Dendritic cell treated with granulocyte-macrophage colony-stimulating factor and Interleukin-4, amounts not matched to agents 40 ng/mL and 50 ng/mL, for 4 days (primary cell): ENCODE measurements at regions of chr12 and their contacts with region 1.

Region 1: GRCh38 chr12:94762259-94762942 is 112.0 kb upstream of the TMCC3 start:
- H3K4me3 Mint-ChIP-seq: no peak overlapping the region
- H3K27ac Mint-ChIP-seq: no peak overlapping the region
- H3K4me1 Mint-ChIP-seq: peaks cover 7% of the 10 kb centered on the region
- H3K27me3 Mint-ChIP-seq: peaks cover 3% of the 10 kb centered on the region

Region 2: GRCh38 chr12:94545935-94546771 is 216.2 kb before region 1 on chr12:
- intact Hi-C with region 1: loop called (anchors 5 kb)
- H3K4me3 Mint-ChIP-seq: no peak overlapping the region
- H3K27ac Mint-ChIP-seq: no peak overlapping the region
- H3K4me1 Mint-ChIP-seq: peaks cover 13% of the 10 kb centered on the region
- H3K27me3 Mint-ChIP-seq: no peaks in the 10 kb centered on the region

Region 3: GRCh38 chr12:94725375-94726168 is 36.8 kb before region 1 on chr12:
- intact Hi-C with region 1: no loop called
- H3K4me3 Mint-ChIP-seq: no peak overlapping the region
- H3K27ac Mint-ChIP-seq: no peak overlapping the region
- H3K4me1 Mint-ChIP-seq: peaks cover 14% of the 10 kb centered on the region
- H3K27me3 Mint-ChIP-seq: peaks cover 17% of the 10 kb centered on the region